Activated T-helper 2 cell treated with anti-CD3 and anti-CD28 coated beads, Interferon-gamma antibody, Interleukin-2, Interleukin-4, amounts not matched to agents 10 μg/mL and 5 μg/mL and 100 μg/mL, durations not matched to agents 14 hours and 24 hours and 36 hours (primary cell): ENCODE measurements at regions of chr6 and their contacts with region 1.

Region 1: DNA sequence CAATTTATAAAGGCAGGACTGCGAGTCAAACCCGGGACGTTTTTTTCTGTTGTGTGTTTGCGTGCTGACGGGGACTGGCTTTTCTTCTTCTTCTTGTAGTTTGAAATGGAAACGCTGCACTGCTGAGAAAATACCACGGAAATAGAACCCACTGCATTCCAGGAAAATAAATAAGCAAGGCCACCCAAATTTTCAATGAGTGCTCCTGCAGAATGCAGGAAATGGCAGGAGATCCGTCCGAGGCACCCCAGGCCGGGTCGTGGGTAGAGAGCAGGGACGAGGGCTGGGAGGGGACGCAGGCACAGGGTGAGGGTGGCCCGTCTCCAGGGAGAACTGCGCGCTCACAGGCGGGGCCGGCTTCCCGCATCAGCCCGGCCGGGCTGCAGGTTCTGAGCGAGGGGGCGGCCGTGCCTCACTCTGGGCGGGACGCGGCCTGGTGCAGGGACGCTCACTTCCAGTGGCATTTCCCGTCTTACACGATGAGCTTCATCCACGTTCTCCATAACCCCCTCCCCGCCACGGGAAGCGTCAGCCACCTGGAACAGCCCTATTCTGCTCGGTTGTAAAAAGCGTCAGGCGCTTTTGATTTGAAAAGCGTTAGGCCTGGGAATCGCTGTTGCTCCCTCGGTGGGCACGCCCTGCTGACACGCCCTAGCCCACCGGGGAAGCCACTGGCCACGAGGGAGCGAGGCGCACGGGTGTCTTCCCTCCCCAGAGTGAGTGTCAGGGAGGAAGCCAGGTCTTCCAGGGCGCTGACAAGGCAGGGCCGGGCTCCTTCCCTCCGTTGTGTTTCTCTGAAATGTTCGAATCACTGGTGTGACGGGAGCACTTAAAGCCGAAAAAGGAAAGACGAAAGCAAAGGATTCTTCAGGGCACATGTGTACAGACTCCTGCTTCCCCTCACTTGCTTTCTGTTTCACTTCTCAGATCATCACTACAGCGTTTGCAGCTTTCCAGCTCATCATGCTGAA is 17.9 kb upstream of the EXOC2 start:
- DNase-seq: peak; percentile 60
- H3K4me3 Mint-ChIP-seq: peak overlapping the region; percentile 96
- H3K27ac Mint-ChIP-seq: peak overlapping the region; percentile 99
- H3K4me1 Mint-ChIP-seq: peaks cover 44% of the 10 kb centered on the region
- H3K27me3 Mint-ChIP-seq: peaks cover 4% of the 10 kb centered on the region

Region 2: GRCh38 chr6:399785-400534 is 310.9 kb before region 1 on chr6:
- intact Hi-C with region 1: loop called (anchors 5 kb)
- DNase-seq: peak; percentile 57
- H3K4me3 Mint-ChIP-seq: peak overlapping the region; percentile 72
- H3K27ac Mint-ChIP-seq: peak overlapping the region; percentile 78
- H3K4me1 Mint-ChIP-seq: peaks cover 86% of the 10 kb centered on the region
- H3K27me3 Mint-ChIP-seq: no peaks in the 10 kb centered on the region

Region 3: DNA sequence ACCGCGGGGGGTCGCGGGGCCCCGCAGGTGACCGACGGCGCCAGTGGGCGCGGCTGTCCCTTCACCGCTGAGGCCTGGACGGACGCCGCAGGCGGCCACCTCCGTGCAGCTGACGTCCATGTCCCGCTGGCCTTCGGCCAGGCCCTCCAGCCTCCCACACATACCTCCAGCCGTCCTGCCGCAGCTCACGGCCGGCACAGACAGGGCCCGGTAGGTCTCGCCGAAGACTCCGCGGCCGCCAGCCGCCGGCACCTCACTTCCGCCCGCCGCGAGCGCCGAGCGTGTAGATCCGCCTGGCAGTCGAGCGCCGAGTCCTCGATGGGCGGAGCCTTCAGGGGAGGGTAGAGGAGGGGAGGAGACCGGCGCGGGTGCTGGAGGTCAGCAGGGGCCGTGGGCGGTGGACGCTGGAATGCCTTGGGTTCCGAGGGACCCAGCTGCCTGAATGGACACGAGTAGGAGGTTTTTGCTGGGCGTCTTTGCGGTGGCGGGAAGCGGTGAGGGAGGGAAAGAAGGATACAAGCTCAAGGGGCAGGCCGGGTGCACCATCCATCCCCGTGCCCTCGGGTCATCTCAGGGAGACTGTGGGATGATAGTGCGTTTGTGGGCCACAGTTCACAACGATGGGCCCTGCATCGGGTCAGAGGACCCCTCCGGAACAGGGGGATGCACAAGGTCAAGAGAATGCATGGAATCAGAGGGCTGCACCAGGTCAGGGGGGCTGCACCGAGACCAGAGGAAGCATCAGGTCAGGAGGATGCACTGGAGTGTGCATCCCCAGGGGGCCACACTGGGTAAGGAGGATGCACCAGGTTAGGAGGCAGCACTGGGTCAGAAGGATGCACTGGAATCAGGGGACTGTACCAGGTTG is 17.8 kb before region 1 on chr6 and contains the start of gene EXOC2:
- intact Hi-C with region 1: loop called (anchors 1 kb)
- DNase-seq: peak; percentile 84
- H3K4me3 Mint-ChIP-seq: peak within 1 kb of the TSS; percentile 96
- H3K27ac Mint-ChIP-seq: peak within 1 kb of the TSS; percentile 85
- H3K4me1 Mint-ChIP-seq: peaks cover 24% of the 10 kb centered on the region
- H3K27me3 Mint-ChIP-seq: no peaks in the 10 kb centered on the region
- total RNA-seq, gene EXOC2: 53.3 and 53.9 TPM in 2 replicates

Region 4: DNA sequence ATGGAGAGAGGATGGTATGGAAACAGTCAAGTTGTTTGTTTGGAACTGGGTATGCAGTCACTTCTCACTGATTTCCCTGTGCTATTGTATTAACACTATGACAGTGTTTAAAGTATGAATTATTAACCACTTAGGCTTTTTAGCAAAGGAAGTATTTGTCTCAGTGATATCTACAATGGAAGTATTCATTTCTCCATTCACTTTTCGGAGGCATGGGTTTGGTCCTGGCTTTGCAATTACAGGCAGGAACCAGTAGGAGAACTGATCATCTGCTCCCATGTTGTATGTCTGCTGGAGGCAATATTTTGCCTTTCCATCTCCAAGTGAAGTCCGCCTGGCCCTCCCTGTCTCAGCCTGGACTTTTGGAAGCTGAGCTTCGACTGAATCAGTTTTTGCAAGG is 12.7 kb after region 1 on chr6:
- intact Hi-C with region 1: no loop called
- DNase-seq: no peak
- H3K4me3 Mint-ChIP-seq: no peak overlapping the region
- H3K27ac Mint-ChIP-seq: no peak overlapping the region
- H3K4me1 Mint-ChIP-seq: peaks cover 5% of the 10 kb centered on the region
- H3K27me3 Mint-ChIP-seq: peaks cover 27% of the 10 kb centered on the region

Region 5: DNA sequence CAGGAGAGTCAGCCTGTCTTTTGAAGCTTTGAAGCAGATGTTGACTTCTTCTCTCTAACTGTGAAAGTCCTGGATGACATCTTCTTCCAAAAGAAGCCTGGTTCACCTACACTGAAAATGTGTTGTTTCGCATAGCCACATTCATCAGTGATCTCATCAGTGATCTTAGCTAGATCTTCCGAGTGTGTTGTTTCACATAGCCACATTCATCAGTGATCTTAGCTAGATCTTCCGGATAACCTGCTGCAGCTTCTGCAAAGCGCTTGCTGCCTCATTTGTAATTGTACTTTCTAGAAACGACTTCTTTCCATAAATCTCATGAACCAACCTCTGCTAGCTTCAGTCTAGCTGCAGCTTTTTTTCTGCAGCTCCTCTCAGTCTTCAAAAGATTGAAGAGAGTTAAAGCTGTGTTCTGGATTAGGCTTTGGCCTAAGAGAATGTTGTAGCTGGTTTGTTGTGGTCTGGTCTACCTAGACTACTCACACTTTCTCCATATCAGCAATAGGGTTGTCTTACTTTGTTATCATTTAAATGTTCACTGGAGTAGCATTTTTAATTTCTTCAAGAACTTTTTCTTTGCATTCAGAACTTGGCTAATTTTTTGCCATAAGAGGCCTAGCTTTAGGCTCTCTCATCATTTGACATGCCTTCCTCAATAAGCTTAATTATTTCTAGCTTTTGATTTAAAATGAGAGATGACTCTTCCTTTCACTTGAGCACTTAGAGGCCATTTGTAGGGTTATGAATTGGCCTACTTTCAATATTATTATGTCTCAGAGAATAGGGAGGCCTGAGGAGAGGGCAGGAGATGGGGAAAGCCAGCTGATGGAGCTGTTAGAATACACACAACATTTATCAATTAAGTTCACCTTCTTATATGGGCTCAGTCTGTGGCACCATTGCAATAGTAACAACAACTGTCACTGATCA is 30.8 kb after region 1 on chr6:
- intact Hi-C with region 1: loop called (anchors 1 kb)
- DNase-seq: no peak
- H3K4me3 Mint-ChIP-seq: no peak overlapping the region
- H3K27ac Mint-ChIP-seq: peak overlapping the region; percentile 63
- H3K4me1 Mint-ChIP-seq: peaks cover 16% of the 10 kb centered on the region
- H3K27me3 Mint-ChIP-seq: peaks cover 5% of the 10 kb centered on the region